GM10248 (cell line): ENCODE measurements at regions of chr3 and their contacts with region 1.

Region 1: DNA sequence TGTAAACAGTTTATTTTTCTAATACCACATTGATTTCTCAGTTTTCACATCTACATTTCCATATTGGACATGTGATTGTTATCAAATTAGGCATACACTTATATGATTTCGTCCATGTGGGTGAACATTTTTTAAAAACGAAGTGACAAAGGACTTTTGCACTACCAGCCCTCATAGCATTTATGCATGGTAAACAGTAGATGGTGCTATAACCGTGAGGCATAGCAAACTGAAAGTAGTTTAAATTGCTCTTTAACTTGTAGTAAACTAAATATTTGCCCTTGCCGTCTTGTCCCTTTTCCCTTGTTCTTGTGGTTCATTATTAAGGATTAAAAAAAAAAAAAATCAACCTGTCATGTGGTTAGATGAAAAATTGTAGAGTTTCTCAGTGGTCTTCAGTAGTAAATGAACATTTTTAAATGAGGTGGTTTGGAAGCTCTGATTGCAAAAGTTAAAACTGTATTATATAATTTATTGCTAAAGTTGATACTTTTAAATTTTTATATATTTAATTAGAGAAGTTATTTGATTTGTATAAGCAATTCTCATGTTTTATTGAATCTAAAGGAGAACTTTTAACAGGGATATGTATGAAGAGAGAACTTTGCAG is 24.0 kb downstream of the STX19 start:
- DNase-seq: peak; percentile 47
- CTCF ChIP-seq: peak; percentile 73

Region 2: DNA sequence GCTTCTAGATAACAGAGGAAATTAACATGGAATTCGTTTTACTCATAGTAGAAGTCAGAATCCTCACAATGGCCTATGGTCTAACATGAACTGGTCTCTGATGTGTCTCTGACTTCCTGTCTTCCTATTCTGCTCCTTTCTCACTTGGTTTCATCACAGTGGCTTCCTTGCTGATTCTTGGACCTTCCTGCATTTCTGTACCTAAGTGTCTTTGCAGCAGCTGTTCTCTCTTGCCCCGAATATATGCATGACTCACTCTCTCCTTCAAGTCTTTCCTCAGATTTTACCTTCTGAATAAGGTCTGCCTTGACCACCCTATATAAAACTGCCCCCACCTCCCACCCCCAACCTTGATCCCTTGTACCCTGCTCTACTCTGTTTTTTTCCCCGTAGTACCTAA is 10.3 kb before region 1 on chr3:
- CTCF ChIA-PET with region 1: interaction called, 18 read pairs
- POLR2A ChIA-PET with region 1: no interaction called
- DNase-seq: no peak
- CTCF ChIP-seq: no peak

Region 3: DNA sequence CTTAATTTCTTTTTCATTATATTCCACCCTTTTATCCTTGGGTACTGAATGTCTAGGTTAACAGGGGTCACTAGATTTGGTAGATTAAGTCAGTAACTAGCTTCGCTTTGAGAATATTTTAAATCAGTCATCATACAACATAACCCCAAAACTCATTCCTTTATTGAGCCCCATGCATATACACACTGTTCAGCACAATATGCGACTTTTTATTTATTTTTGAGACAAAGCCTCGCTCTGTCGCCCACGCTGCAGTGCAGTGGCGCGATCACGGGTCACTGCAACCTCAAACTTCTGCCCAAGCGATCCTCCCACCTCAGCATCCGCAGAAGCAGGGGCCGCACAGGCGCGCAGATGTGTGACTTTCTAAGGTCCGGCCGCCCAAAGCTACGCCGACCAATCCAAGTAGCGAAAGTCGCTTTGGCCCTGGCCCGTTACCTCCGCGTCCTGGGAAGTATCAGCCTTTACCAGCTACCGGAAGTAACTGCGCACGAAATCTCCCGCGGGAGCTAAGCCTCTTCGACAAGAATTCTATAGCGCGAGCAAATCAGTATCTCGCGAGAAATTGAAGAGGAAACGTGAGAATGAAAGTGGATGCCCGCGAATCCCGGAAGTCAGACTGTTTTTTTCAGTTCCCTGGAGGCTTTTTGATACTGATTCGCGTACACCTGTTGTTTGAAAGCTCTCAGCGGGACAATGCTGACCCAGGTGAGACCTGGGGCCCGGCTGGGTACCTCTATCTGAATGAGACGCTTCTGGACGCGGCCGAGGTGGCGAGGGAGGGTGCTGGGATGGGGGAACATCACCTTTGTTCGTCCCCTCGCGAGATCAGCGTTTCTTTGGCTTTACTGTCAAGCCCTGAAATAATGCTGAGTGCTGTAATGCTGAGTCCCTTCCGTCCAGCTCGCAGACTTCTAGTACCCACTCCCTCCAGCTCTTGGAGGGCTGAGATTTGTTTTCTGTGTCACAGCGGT is 58.3 kb after region 1 on chr3 and contains the starts of genes DHFR2 and NSUN3:
- CTCF ChIA-PET with region 1: interaction called, 10 read pairs
- POLR2A ChIA-PET with region 1: no interaction called
- DNase-seq: peak; percentile 84
- CTCF ChIP-seq: no peak

Region 4: DNA sequence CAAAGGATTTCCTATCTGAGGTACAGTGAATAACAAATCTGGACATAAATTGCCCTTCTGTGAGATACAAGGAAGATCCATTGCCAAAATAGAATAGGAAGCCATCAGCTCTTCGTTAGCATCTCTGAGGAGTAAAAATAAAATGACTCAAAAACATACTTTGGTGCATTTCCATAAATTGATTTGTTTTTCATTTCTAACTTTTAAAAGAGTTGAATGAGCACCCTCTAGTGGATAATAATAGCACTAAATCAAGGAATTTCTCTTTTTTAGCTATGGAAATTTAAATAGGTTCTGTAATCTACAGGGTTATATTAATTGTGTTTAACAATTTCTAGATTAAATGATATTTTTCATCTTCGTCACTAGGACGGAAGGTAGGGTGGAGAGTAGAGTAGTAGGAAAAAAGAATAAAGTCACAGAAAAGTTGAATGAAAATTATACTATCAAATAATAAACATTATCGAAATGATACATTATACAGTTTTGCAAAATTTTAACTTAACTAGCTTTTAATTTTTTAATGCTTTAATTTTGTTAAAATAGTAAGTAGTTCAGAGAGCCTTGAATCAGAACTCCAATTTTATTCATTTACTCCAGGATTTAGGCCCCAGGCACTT is 64.9 kb after region 1 on chr3:
- CTCF ChIA-PET with region 1: interaction called, 13 read pairs
- POLR2A ChIA-PET with region 1: no interaction called
- DNase-seq: no peak
- CTCF ChIP-seq: peak; percentile 45